Naive thymus-derived CD4-positive, alpha-beta T cell (primary cell): ENCODE measurements at regions of chr17 and their contacts with region 1.

Region 1: GRCh38 chr17:65794572-65794971 is 233.1 kb upstream of the AXIN2 start:
- DNase-seq: peak in 6 of 9 donors; percentile 11 to 36 (median 28)
- ATAC-seq: peak; percentile 37
- H3K4me3 ChIP-seq: no peak overlapping the region
- H3K4me3 Mint-ChIP-seq: no peak overlapping the region
- H3K27ac ChIP-seq: no peak overlapping the region
- H3K27ac Mint-ChIP-seq: no peak overlapping the region
- H3K4me1 ChIP-seq: no peaks in the 10 kb centered on the region
- H3K4me1 Mint-ChIP-seq: peaks cover 0 to 6% (median 0%) of the 10 kb centered on the region in 7 donors
- H3K27me3 ChIP-seq: no peaks in the 10 kb centered on the region
- H3K27me3 Mint-ChIP-seq: peaks cover 0 to 7% (median 0%) of the 10 kb centered on the region in 5 donors

Region 2: DNA sequence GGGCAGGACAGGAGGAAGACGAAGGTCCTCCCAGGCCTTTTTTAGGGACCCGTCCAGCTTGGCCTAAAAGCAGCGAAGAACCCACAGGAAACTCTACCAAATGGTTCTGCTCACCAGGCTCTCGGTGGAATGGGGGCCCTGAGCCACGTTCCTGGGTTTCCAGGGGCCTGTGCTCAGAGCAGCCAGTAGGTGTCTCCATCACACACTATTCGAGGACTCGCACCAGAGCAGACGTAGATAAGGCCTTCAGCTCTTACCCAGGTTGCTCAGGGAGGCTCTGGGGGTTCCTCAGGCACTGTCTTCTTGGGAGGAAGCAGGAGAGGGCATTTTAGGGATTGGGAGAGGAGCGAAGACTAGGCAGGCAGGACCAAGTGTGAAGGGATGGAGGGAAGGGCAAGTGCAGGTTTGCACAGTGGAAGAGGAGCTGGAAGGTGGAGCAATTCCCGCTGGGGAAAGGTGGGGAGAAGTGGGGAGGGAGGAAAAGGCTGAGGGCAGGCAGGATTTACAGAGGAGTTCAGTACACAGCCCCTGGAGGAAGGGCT is 500.3 kb before region 1 on chr17:
- CTCF ChIA-PET with region 1: interaction called, 38 read pairs
- POLR2A ChIA-PET with region 1: no interaction called
- intact Hi-C with region 1: loop called (anchors 1 kb)
- DNase-seq: peak; percentile 15 to 70 (median 60)
- ATAC-seq: peak; percentile 86
- H3K4me3 ChIP-seq: no peak overlapping the region
- H3K4me3 Mint-ChIP-seq: no peak overlapping the region
- H3K27ac ChIP-seq: no peak overlapping the region
- H3K27ac Mint-ChIP-seq: peak overlapping the region in 1 of 9 donors; percentile 80
- H3K4me1 ChIP-seq: no peaks in the 10 kb centered on the region
- H3K4me1 Mint-ChIP-seq: peaks cover 0 to 5% (median 5%) of the 10 kb centered on the region in 7 donors
- H3K27me3 ChIP-seq: no peaks in the 10 kb centered on the region
- H3K27me3 Mint-ChIP-seq: peaks cover 0 to 18% (median 0%) of the 10 kb centered on the region in 5 donors

Region 3: GRCh38 chr17:65418628-65419027 is 375.9 kb before region 1 on chr17:
- CTCF ChIA-PET with region 1: no interaction called
- POLR2A ChIA-PET with region 1: no interaction called
- intact Hi-C with region 1: loop called (anchors 2 to 10 kb)
- DNase-seq: no peak
- ATAC-seq: no peak
- H3K4me3 ChIP-seq: no peak overlapping the region
- H3K4me3 Mint-ChIP-seq: no peak overlapping the region
- H3K27ac ChIP-seq: no peak overlapping the region
- H3K27ac Mint-ChIP-seq: no peak overlapping the region
- H3K4me1 ChIP-seq: no peaks in the 10 kb centered on the region
- H3K4me1 Mint-ChIP-seq: no peaks in the 10 kb centered on the region
- H3K27me3 ChIP-seq: no peaks in the 10 kb centered on the region
- H3K27me3 Mint-ChIP-seq: peaks cover 0 to 4% (median 2%) of the 10 kb centered on the region in 5 donors

Region 4: GRCh38 chr17:65455972-65456343 is 338.6 kb before region 1 on chr17:
- CTCF ChIA-PET with region 1: interaction called, 5 read pairs
- POLR2A ChIA-PET with region 1: no interaction called
- intact Hi-C with region 1: loop called in 1 of 2 experiments (anchors 1 kb)
- DNase-seq: peak in 7 of 9 donors; percentile 28 to 63 (median 48)
- ATAC-seq: peak; percentile 60
- H3K4me3 ChIP-seq: no peak overlapping the region
- H3K4me3 Mint-ChIP-seq: no peak overlapping the region
- H3K27ac ChIP-seq: no peak overlapping the region
- H3K27ac Mint-ChIP-seq: peak overlapping the region in 1 of 9 donors; percentile 22
- H3K4me1 ChIP-seq: no peaks in the 10 kb centered on the region
- H3K4me1 Mint-ChIP-seq: peaks cover 0 to 18% (median 5%) of the 10 kb centered on the region in 7 donors
- H3K27me3 ChIP-seq: no peaks in the 10 kb centered on the region
- H3K27me3 Mint-ChIP-seq: peaks cover 0 to 18% (median 0%) of the 10 kb centered on the region in 5 donors

Region 5: GRCh38 chr17:65523853-65524664 is 270.5 kb before region 1 on chr17:
- CTCF ChIA-PET with region 1: no interaction called
- POLR2A ChIA-PET with region 1: no interaction called
- intact Hi-C with region 1: no loop called
- DNase-seq: peak in 1 of 9 donors; percentile 28
- ATAC-seq: peak; percentile 7
- H3K4me3 ChIP-seq: no peak overlapping the region
- H3K4me3 Mint-ChIP-seq: peak overlapping the region; percentile 46 to 80 (median 63)
- H3K27ac ChIP-seq: peak overlapping the region; percentile 63
- H3K27ac Mint-ChIP-seq: peak overlapping the region; percentile 57 to 96 (median 91)
- H3K4me1 ChIP-seq: peaks cover 24 to 28% of the 10 kb centered on the region in 2 donors
- H3K4me1 Mint-ChIP-seq: peaks cover 15 to 56% (median 47%) of the 10 kb centered on the region in 7 donors
- H3K27me3 ChIP-seq: no peaks in the 10 kb centered on the region
- H3K27me3 Mint-ChIP-seq: peaks cover 0 to 64% (median 0%) of the 10 kb centered on the region in 5 donors